ENCODE measurements at regions of chr2 and their contacts with region 1.

Region 1: DNA sequence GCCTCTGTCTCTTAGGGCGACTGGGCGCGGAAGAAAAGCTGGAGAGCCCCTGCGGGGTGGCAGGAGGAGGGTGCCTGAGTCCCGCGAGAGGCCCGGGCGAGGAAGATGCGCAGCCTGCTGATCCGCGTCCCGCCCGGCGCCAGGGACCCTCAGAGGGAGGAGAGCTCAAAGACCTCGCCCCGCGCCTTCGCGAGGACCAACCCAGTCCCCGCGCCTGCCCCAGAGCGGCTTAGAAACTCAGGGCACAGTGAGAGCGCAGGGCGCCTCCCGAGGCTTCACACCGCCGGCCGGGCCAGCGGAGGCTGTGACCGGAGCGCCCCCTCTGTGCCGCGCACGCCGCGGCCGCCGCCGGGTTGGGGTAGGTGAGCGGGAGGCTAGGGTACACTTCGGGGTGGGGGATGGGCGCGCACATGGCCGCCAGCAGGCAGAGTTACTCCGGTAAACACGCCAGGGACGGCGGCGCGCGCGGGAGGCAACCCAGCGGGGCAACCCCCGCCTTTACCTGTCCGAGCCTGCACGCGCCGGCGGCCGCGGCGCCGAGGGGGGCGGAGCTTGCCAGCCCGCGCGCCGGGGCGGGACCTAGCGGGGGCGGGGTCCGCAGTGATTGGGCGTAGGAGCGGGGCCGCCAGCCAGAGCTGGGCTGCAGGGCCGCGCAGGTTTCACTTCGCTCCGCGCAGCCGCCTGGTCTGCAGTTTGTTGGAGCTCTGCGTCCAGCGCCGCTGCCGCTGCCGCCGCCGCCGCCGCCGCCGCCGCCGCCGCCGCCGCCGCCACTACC is at the start of gene BCL2L11:
- DNase-seq: peak; percentile 98
- ATAC-seq: peak; percentile 74
- H3K4me3 Mint-ChIP-seq: peak within 1 kb of the TSS; percentile 97
- H3K27ac Mint-ChIP-seq: peak within 1 kb of the TSS; percentile 89
- H3K4me1 Mint-ChIP-seq: peaks cover 50% of the 10 kb centered on the region
- H3K27me3 Mint-ChIP-seq: peaks cover 5% of the 10 kb centered on the region
- CTCF ChIP-seq: no peak
- total RNA-seq, gene BCL2L11: 205 and 221 TPM in 2 replicates

Region 2: GRCh38 chr2:111028727-111029126 is 91.7 kb before region 1 on chr2:
- CTCF ChIA-PET with region 1: interaction called, 3 read pairs
- POLR2A ChIA-PET with region 1: interaction called, 3 read pairs
- intact Hi-C with region 1: loop called (anchors 2 kb)
- DNase-seq: no peak
- ATAC-seq: peak; percentile 61
- H3K4me3 Mint-ChIP-seq: no peak overlapping the region
- H3K27ac Mint-ChIP-seq: no peak overlapping the region
- H3K4me1 Mint-ChIP-seq: peaks cover 9% of the 10 kb centered on the region
- H3K27me3 Mint-ChIP-seq: peaks cover 2% of the 10 kb centered on the region
- CTCF ChIP-seq: no peak

Region 3: DNA sequence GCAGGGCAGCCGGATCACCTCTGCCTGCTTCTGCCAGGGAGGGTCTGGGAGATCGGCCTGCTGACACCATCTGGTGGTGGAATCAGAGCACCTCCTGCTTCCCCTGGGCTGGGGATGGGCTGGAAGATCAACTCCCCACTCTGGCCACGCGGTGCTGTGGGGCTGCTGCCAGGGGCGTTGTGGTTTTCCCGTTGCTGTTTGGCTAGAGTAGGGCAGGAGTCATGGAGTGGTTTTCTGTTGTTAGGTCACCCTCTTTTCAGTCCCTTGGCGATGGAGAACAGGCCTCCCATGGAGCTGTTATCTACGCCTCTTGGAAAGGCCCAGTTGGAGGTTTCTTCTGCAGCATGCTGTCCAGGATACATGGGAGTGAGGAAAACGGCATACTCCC is 15.5 kb after region 1 on chr2:
- CTCF ChIA-PET with region 1: no interaction called
- POLR2A ChIA-PET with region 1: interaction called, 30 read pairs
- intact Hi-C with region 1: no loop called
- DNase-seq: no peak
- ATAC-seq: no peak
- H3K4me3 Mint-ChIP-seq: no peak overlapping the region
- H3K27ac Mint-ChIP-seq: no peak overlapping the region
- H3K4me1 Mint-ChIP-seq: peaks cover 40% of the 10 kb centered on the region
- H3K27me3 Mint-ChIP-seq: no peaks in the 10 kb centered on the region
- CTCF ChIP-seq: no peak

Region 4: DNA sequence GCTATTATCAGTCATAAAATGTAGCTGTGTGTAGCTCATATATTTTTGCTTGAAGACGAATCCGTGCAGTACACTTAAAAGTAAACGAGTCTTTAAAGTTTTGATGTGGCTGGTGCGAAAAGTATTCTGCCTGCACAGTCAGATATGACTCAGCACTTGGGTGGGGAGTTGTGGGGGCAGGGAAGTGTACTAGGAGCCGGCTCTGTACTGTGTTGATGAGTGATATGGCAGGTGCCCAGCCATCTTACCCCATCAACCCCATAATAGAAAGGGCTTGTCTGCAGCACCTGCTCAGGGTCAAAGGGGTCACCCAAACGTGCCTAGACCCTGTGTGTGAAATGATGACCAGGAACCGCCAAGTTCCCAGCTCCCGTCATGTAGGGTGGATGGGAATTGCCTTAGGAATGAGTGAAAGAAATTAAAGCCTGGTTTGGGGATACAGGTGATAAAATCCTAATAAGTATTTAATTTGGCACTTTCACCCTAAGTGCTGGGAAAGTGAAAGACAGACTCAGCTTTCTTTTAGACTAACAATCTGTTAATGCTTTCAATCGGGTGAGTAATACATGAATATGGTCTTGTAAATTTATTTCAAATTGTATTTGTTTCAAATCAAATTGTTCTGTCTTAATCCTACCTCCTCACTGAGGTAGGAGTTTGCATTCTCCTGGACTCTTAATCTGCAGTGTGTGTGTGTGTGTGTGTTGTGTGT is 48.2 kb after region 1 on chr2:
- CTCF ChIA-PET with region 1: no interaction called
- POLR2A ChIA-PET with region 1: interaction called, 11 read pairs
- intact Hi-C with region 1: no loop called
- DNase-seq: no peak
- ATAC-seq: peak; percentile 59
- H3K4me3 Mint-ChIP-seq: no peak overlapping the region
- H3K27ac Mint-ChIP-seq: no peak overlapping the region
- H3K4me1 Mint-ChIP-seq: peaks cover 25% of the 10 kb centered on the region
- H3K27me3 Mint-ChIP-seq: no peaks in the 10 kb centered on the region
- CTCF ChIP-seq: no peak

Region 5: GRCh38 chr2:111698743-111699554 is 578.5 kb after region 1 on chr2:
- CTCF ChIA-PET with region 1: interaction called, 5 read pairs
- POLR2A ChIA-PET with region 1: interaction called, 5 read pairs
- intact Hi-C with region 1: loop called (anchors 1 kb)
- DNase-seq: no peak
- ATAC-seq: no peak
- H3K4me3 Mint-ChIP-seq: no peak overlapping the region
- H3K27ac Mint-ChIP-seq: no peak overlapping the region
- H3K4me1 Mint-ChIP-seq: peaks cover 13% of the 10 kb centered on the region
- H3K27me3 Mint-ChIP-seq: peaks cover 10% of the 10 kb centered on the region
- CTCF ChIP-seq: no peak

Measured in activated B cell treated with CpG ODN at 0.5 μM for 24 hours (primary cell).